Posterior cingulate gyrus (tissue), 11 donors: ENCODE measurements at regions of chr3 and their contacts with region 1.

Region 1: GRCh38 chr3:49093853-49094767 is at the start of gene QRICH1:
- DNase-seq: peak; percentile 92 to 99 (median 96)

Region 2: GRCh38 chr3:49021813-49022687 is 72.1 kb before region 1 on chr3 and contains the start of gene NDUFAF3:
- intact Hi-C with region 1: loop called (anchors 10 kb)
- DNase-seq: peak; percentile 90 to 99 (median 92)

Region 3: GRCh38 chr3:49133226-49133951 is 39.3 kb after region 1 on chr3:
- intact Hi-C with region 1: loop called (anchors 2 kb)
- DNase-seq: peak; percentile 71 to 97 (median 78)